GM18951 (cell line): ENCODE measurements at regions of chr5 and their contacts with region 1.

Region 1: DNA sequence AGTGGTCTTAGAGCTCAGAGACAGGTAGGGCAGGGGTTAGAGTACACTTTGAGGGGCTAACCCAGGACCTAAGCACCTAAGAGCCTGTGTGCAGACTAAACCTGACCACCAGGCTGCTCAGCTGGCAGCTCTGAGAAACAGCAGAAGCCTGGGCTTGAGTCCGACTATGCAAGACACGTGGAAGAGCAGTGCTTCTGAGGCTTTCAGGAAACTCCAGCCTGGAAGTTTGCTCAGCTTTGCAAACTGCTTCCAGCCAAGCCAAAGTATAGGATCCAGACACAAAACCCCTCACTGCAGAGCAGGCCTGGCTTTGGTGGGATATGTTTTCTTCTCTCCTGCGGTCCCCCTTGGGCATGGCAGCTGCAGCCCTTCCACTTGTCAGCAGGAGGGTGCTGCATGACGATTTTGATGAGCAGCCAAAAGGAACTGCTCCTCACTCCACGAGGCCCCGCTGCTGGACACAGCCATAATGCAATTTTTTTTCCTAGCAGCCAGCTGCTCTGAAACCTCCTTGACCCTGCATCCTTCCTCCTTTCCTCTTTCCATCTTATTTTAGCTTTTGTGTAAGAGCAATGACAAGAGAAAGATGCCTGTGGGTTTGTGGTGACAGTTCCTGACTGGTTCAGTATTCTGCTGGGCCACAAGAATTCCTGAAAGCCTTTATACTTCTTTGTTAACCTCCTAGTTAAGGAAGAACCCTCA is 123.1 kb downstream of the LIFR start:
- POLR2A ChIP-seq: no peak

Region 2: GRCh38 chr5:38639377-38640332 is 206.3 kb after region 1 on chr5:
- in situ Hi-C with region 1: no loop called
- POLR2A ChIP-seq: no peak

Region 3: DNA sequence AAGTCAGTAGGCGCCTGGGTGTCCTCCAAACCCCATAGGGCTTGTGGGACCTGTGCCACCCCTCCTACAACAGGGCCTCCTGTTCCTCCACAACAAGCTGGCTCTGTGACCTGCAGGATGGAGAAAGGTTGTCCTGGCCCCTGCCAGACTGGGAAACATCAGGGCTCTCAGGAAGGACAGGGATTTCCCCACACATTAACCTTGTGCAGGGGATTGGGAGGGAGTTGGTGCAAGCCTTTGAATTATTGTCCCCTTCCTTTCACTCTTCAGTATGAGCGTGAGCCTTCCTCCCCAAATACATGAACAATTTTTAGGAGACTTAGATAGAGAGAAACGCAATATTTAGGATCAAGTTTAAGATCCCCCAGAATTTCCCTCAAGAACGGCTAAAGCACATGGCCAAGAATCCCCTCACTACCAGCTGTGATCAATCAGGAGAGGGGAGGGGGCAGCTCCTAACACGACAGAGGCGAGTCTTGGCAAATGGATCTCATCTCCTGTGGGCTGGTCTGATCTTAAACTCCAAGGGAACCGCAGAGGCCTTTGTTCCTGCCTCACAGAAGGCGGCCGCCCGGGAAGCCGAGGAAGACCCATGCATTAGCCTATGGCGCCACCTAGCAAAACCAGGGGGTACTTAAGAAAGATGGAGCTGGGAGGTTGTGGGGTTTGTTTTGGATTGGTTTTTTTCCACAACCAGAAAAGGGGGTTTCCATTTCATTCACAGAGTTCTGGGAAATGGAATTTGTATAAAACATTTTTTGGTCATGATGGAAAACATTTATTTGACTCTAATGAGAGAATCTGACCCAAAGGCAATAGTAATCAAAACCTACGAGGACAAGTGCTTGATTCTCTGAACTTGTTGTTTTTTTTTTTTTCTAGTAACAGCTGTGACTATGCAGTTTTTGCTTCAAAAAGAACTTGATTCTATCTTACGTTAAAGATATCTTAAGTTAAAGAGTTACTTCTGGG is 376.4 kb after region 1 on chr5:
- in situ Hi-C with region 1: loop called (anchors 10 kb)
- POLR2A ChIP-seq: no peak